CD14-positive monocyte (primary cell): ENCODE measurements at regions of chr14 and their contacts with region 1.

Region 1: DNA sequence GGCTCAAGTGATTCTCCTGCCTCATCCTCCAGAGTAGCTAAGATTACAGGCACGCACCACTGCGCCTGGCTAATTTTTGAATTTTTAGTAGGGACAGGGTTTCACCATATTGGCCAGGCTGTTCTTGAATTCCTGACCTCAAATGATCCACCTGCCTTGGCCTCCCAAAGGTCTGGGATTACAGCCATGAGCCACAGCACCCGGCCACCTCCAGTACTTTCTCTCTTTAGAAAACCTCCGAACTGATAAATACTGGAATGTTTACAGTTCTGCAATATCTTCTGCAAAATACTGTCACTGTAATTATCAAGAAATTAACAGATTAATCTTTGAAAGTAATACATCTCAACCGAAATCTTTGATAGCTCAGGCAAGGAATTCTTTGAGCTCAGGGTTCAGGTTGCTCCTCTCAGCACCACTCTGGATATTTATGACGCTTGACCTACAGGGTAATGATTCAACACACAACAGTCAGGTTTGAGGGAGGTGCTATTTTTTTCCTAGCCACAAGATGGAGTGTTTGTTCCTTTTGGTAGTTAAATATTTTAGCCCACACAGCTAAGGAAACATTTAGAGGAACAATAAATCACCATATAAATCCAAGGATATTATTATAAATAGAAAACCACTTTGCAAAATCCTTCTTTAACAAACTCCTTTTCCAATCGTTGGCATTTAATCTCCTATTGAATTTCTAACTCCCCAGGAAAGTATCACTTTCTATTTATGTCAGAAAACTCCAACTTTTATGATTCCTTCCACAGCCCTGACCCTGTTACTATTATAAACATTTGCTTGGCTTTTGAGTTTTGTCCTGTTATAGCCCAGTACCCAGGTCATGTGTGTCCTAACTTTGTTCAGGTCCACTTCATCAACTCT is 48.6 kb upstream of the GTF2A1 start:
- DNase-seq: peak; percentile 45 to 70 (median 62)
- H3K4me3 ChIP-seq: no peak overlapping the region
- H3K4me3 Mint-ChIP-seq: no peak overlapping the region
- H3K27ac ChIP-seq: no peak overlapping the region
- H3K27ac Mint-ChIP-seq: no peak overlapping the region
- H3K4me1 ChIP-seq: no peaks in the 10 kb centered on the region
- H3K4me1 Mint-ChIP-seq: no peaks in the 10 kb centered on the region
- H3K27me3 ChIP-seq: no peaks in the 10 kb centered on the region
- H3K27me3 Mint-ChIP-seq: peaks cover 0 to 1% (median 0%) of the 10 kb centered on the region in 3 donors
- CTCF ChIP-seq: peak; percentile 92

Region 2: GRCh38 chr14:81453166-81453766 is 183.9 kb after region 1 on chr14:
- intact Hi-C with region 1: loop called in 1 of 2 experiments (anchors 2 kb)
- DNase-seq: peak; percentile 38 to 62 (median 51)
- H3K4me3 ChIP-seq: no peak overlapping the region
- H3K4me3 Mint-ChIP-seq: peak overlapping the region in 1 of 2 donors; percentile 59
- H3K27ac ChIP-seq: no peak overlapping the region
- H3K27ac Mint-ChIP-seq: no peak overlapping the region
- H3K4me1 ChIP-seq: no peaks in the 10 kb centered on the region
- H3K4me1 Mint-ChIP-seq: no peaks in the 10 kb centered on the region
- H3K27me3 ChIP-seq: peaks cover 8 to 12% of the 10 kb centered on the region in 2 donors
- H3K27me3 Mint-ChIP-seq: peaks cover 18 to 27% (median 22%) of the 10 kb centered on the region in 3 donors
- CTCF ChIP-seq: peak; percentile 91

Region 3: DNA sequence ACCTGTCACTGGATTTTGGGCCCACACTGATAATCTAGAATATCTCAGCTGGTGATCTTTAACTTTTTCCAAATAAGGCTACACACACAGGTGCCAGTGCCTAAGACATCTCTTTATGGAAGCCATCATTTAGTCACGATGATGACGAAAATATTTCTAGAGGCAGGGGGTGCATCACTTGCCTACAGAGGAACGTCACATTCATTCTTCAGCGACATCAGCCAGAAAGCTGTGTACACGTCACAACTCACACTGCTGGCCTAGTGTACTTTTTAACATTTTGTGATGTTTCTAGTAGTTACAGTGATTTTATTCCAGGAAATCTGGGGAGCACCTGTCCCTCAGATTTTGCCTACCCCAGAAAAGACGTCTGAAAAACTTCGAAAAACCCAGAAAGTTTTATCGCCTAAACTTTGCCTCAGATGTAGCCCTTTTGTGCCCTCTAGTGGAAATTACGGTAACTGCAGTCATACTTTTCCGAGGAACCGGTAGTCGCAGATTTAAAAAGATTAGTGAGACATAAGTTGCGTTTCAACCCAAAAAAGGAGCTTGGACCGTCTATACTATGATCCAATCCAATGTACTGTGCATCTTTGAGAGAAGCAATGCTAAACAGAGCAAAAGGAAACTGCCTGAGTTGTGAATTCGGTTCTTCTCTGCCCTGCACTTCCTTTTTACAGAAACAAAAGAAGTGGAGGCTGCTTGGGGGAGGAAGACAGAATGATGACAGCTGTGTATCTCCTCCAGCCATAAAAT is 195.1 kb after region 1 on chr14:
- intact Hi-C with region 1: loop called in 1 of 2 experiments (anchors 5 kb)
- DNase-seq: peak; percentile 38 to 59 (median 53)
- H3K4me3 ChIP-seq: peak overlapping the region; percentile 43 to 97 (median 83)
- H3K4me3 Mint-ChIP-seq: peak overlapping the region; percentile 66 to 86
- H3K27ac ChIP-seq: peak overlapping the region in 1 of 2 donors; percentile 70
- H3K27ac Mint-ChIP-seq: peak overlapping the region in 5 of 7 donors; percentile 20 to 70 (median 26)
- H3K4me1 ChIP-seq: peaks cover 0 to 4% of the 10 kb centered on the region in 2 donors
- H3K4me1 Mint-ChIP-seq: peaks cover 5% of the 10 kb centered on the region
- H3K27me3 ChIP-seq: no peaks in the 10 kb centered on the region
- H3K27me3 Mint-ChIP-seq: peaks cover 0 to 2% (median 0%) of the 10 kb centered on the region in 3 donors
- CTCF ChIP-seq: peak; percentile 91